ENCODE measurements at regions of chr6 and their contacts with region 1.

Region 1: DNA sequence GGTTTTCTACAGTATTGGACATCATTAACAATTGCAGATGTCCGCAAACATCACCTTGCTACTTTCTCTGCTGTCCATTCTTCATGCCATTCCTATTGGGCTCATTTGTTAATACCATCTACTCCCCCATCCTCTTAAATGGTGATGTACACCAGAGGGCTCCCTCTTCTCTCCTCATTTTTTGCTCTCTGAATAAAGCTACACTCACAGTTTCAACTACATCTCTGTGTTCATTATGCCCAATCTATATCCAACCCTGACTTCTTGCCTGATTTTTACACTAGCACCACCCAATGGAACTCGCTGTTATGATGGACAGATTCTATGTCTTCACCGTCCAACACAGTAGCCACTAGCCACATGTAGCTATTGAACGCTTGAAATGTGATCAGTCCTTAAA is 288.1 kb upstream of the ID4 start:
- DNase-seq: no peak
- ATAC-seq: no peak
- H3K4me3 ChIP-seq: no peak overlapping the region
- H3K4me3 Mint-ChIP-seq: no peak overlapping the region
- H3K27ac ChIP-seq: no peak overlapping the region
- H3K27ac Mint-ChIP-seq: no peak overlapping the region
- H3K4me1 ChIP-seq: no peaks in the 10 kb centered on the region
- H3K4me1 Mint-ChIP-seq: no peaks in the 10 kb centered on the region
- H3K27me3 ChIP-seq: no peaks in the 10 kb centered on the region
- H3K27me3 Mint-ChIP-seq: no peaks in the 10 kb centered on the region
- CTCF ChIP-seq: no peak

Region 2: DNA sequence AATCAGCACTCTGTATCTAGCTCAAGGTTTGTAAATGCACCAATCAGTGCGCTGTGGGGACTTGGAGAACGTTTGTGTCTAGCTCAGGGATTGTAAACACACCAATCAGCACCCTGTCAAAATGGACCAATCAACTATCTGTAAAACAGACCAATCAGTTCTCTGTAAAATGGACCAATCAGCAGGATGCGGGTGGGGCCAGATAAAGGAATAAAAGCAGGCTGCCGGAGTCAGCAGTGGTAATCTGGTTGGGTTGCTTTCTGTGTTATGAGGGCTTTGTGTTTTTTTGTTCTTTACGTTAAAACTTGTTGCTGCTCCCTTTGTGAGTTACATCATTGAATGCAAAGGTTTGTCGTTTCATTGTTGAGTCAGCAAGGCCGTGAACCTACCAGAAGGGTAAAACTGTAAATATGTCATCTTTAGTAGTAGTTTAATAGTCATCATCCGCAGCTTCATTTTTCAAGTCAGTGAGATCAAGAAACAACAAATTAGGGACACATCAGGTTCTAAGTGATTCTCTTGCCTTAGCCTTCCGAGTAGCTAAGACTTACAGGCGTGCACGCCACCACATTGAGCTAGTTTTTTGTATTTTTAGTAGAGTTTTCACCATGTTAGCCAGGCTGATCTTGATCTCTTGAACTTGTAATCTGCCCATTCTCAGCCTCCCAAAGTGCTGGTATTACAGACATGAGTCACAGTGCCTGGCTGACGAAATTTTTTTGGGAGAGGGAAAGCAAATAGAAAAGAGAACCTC is 1819.6 kb before region 1 on chr6:
- CTCF ChIA-PET with region 1: no interaction called
- POLR2A ChIA-PET with region 1: no interaction called
- intact Hi-C with region 1: no loop called
- DNase-seq: no peak
- ATAC-seq: no peak
- H3K4me3 ChIP-seq: no peak overlapping the region
- H3K4me3 Mint-ChIP-seq: no peak overlapping the region
- H3K27ac ChIP-seq: no peak overlapping the region
- H3K27ac Mint-ChIP-seq: no peak overlapping the region
- H3K4me1 ChIP-seq: no peaks in the 10 kb centered on the region
- H3K4me1 Mint-ChIP-seq: no peaks in the 10 kb centered on the region
- H3K27me3 ChIP-seq: no peaks in the 10 kb centered on the region
- H3K27me3 Mint-ChIP-seq: peaks cover 3% of the 10 kb centered on the region
- CTCF ChIP-seq: no peak

Region 3: GRCh38 chr6:19501737-19502245 is 47.3 kb before region 1 on chr6:
- CTCF ChIA-PET with region 1: no interaction called
- POLR2A ChIA-PET with region 1: no interaction called
- intact Hi-C with region 1: loop called in 1 of 2 experiments (anchors 1 kb)
- DNase-seq: no peak
- ATAC-seq: no peak
- H3K4me3 ChIP-seq: no peak overlapping the region
- H3K4me3 Mint-ChIP-seq: no peak overlapping the region
- H3K27ac ChIP-seq: no peak overlapping the region
- H3K27ac Mint-ChIP-seq: no peak overlapping the region
- H3K4me1 ChIP-seq: no peaks in the 10 kb centered on the region
- H3K4me1 Mint-ChIP-seq: no peaks in the 10 kb centered on the region
- H3K27me3 ChIP-seq: no peaks in the 10 kb centered on the region
- H3K27me3 Mint-ChIP-seq: no peaks in the 10 kb centered on the region
- CTCF ChIP-seq: no peak

Measured in CD8-positive, alpha-beta T cell (primary cell).